ENCODE measurements at regions of chr5 and their contacts with region 1.

Region 1: DNA sequence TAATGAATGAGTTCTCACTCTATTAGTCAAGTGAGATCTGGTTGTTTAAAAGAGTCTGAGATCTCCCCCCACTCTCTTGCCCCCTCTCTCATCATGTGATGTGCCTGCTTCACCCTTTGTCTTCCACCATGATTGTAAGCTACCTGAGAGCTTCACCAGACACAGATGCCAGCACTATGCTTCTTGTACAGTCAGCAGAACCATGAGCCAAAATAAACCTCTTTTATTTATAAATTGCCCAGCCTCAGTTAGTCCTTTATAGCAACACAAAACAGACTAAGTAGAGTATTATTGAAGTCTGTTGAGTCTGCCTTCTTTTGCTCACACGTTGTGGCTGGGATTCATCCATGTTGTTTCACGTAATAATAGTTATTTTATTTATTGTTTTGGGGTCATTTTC is 14.3 kb downstream of the CYSTM1 start:
- DNase-seq: no peak
- H3K4me3 Mint-ChIP-seq: no peak overlapping the region
- H3K27ac Mint-ChIP-seq: no peak overlapping the region
- H3K4me1 Mint-ChIP-seq: peaks cover 30% of the 10 kb centered on the region
- H3K27me3 Mint-ChIP-seq: no peaks in the 10 kb centered on the region
- CTCF ChIP-seq: no peak

Region 2: GRCh38 chr5:140020601-140021177 is 168.6 kb before region 1 on chr5:
- CTCF ChIA-PET with region 1: no interaction called
- intact Hi-C with region 1: no loop called
- DNase-seq: no peak
- H3K4me3 Mint-ChIP-seq: no peak overlapping the region
- H3K27ac Mint-ChIP-seq: no peak overlapping the region
- H3K4me1 Mint-ChIP-seq: no peaks in the 10 kb centered on the region
- H3K27me3 Mint-ChIP-seq: peaks cover 17% of the 10 kb centered on the region
- CTCF ChIP-seq: no peak

Region 3: DNA sequence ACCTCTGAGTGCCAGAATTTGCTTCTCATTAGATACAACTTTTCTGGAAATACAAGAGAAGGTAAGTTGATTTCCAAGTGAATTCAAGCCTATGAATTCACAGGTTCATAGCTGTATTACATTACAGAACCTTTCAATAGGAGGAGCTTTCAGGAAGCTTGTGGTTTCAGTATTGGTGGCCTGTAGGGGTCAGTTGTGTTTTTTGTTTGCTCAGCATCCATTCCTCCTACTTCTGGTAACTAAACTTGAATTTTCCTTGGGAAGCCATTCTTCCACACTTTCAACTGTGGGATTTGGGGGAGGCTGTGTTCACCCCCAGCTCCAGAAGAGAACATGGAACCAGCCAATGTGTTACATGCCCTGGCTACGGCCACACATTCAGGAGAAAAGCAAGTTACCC is 19.8 kb before region 1 on chr5:
- CTCF ChIA-PET with region 1: interaction called, 10 read pairs
- intact Hi-C with region 1: no loop called
- DNase-seq: no peak
- H3K4me3 Mint-ChIP-seq: no peak overlapping the region
- H3K27ac Mint-ChIP-seq: no peak overlapping the region
- H3K4me1 Mint-ChIP-seq: peaks cover 43% of the 10 kb centered on the region
- H3K27me3 Mint-ChIP-seq: peaks cover 16% of the 10 kb centered on the region
- CTCF ChIP-seq: no peak